ENCODE measurements at regions of chr17 and their contacts with region 1.

Region 1: DNA sequence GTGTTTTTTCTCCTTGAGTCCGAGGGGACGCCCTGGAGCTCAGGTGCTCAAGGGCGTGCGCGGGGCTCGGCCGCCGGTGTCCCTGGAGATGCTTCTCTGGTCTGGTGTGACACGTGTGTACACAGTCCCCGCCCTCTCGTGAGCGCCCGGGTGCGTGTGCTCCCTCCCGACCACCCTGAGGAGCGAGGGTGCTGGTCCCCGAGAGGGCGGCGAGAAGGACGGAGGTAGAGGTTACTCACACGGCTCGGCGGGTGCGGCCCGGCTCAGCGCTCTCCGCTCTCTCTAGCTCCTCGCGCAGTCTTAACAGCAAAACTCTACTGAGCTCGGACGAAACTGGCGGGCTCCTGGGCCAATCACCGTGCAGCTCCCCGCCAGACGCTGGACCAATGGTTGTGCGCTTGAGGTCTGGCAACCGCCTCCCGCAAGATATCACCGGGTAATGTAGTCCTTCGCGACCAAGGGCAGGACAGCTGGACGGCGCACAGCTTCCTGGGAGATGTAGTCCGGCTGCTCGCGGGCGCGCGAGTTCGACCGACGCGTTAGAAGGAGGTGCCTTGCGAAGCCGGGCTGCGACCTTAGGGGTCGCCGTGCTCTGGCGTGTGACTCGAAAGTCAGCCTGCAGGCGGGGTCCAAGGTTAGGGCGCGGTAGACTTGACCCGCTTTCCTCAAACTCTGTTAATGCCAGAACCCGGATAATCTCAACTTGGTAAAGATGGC is at the start of gene SLC25A19:
- DNase-seq: peak; percentile 98
- H3K4me3 Mint-ChIP-seq: peak within 1 kb of the TSS; percentile 99
- H3K27ac Mint-ChIP-seq: peak within 1 kb of the TSS; percentile 100
- H3K4me1 Mint-ChIP-seq: peaks cover 20% of the 10 kb centered on the region
- H3K27me3 Mint-ChIP-seq: no peaks in the 10 kb centered on the region
- total RNA-seq, gene SLC25A19: 97.4 and 101 TPM in 2 replicates

Region 2: DNA sequence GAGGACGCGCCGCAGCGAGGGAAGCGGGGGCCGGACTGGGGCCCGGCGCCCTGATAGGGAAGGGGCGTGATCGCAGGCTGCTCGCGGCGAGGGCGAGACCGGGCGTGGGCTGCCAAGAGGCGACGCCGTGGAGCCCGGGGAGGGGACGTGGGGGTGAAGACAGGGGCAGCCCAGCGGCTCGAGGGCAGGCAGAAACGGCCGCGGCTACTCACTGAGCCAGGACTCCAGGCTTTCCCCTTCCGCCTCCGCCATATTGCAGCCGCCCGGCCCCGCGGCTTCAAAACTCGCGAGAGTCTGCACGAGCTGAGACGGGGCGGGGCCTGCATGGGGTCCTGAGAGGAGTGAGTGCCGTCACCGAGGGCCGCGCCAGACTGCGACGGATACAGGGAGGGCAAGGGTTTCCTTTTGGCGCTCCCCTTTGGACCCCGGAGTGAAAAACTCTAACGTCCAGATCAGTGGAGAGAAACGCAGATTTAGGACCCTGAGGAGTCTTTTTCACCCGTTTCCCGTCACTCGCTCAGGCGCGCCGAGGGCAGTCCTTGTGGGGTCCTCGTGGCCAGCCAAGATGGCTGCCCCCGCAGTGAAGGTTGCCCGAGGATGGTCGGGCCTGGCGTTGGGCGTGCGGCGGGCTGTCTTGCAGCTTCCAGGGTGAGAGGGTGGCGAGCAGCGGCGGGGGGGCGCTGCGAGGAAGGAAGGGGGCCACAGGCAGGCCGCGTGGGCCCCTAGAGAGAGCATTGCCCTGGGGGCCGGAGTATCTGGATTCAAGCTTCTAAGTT is 27.7 kb before region 1 on chr17 and contains the starts of genes GGA3 and MRPS7:
- intact Hi-C with region 1: loop called (anchors 1 kb)
- DNase-seq: peak; percentile 93
- H3K4me3 Mint-ChIP-seq: peak within 1 kb of the TSS; percentile 99
- H3K27ac Mint-ChIP-seq: peak within 1 kb of the TSS; percentile 100
- H3K4me1 Mint-ChIP-seq: peaks cover 43% of the 10 kb centered on the region
- H3K27me3 Mint-ChIP-seq: no peaks in the 10 kb centered on the region
- total RNA-seq, gene GGA3: 71.7 and 77.2 TPM in 2 replicates
- total RNA-seq, gene MRPS7: 99.4 and 101 TPM in 2 replicates

Region 3: GRCh38 chr17:75271233-75271954 is 17.9 kb before region 1 on chr17:
- intact Hi-C with region 1: loop called (anchors 1 kb)
- DNase-seq: peak; percentile 87
- H3K4me3 Mint-ChIP-seq: peak overlapping the region; percentile 88
- H3K27ac Mint-ChIP-seq: peak overlapping the region; percentile 74
- H3K4me1 Mint-ChIP-seq: peaks cover 33% of the 10 kb centered on the region
- H3K27me3 Mint-ChIP-seq: no peaks in the 10 kb centered on the region

Region 4: DNA sequence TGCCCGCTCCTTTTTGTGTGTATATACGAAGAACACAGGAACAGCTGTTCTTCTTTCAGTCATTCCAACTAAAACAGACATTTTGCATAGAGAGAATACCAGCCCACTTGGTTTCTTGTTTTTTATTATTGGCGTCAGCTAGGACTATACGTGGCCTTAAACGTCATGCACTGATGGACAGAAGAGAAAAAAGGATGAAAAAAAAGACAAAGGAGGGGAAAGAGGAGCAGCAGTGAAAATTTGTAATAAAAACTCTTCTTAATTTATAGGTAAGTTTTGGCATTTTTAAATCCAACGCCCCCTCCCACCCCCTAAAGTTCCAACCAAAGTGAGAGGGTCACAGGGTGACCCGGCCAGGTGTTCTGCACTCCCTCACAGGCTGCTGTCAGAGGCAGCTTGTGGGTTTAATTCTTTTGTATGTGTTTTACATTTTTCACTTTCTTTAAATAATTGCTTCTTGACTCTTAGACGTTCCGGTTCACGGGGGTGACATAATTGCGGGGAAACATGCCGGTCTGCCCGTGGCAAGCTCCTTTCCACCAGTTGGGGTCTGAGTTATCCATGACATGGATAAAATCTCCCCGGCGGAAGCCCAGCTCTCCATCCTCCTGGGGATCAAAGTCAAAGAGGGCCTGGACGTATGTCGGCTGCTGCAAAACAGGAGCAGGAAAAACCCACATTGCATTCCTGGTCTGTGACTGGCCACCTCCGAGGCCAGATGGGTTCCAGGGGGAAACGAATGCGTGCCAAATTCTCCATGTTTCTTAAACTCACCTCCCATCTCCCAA is 30.8 kb after region 1 on chr17:
- intact Hi-C with region 1: loop called (anchors 2 kb)
- DNase-seq: no peak
- H3K4me3 Mint-ChIP-seq: no peak overlapping the region
- H3K27ac Mint-ChIP-seq: no peak overlapping the region
- H3K4me1 Mint-ChIP-seq: peaks cover 19% of the 10 kb centered on the region
- H3K27me3 Mint-ChIP-seq: no peaks in the 10 kb centered on the region

Region 5: GRCh38 chr17:75398279-75398678 is 109.0 kb after region 1 on chr17:
- intact Hi-C with region 1: no loop called
- DNase-seq: no peak
- H3K4me3 Mint-ChIP-seq: no peak overlapping the region
- H3K27ac Mint-ChIP-seq: peak overlapping the region; percentile 42
- H3K4me1 Mint-ChIP-seq: peaks cover 62% of the 10 kb centered on the region
- H3K27me3 Mint-ChIP-seq: no peaks in the 10 kb centered on the region